ENCODE measurements at regions of chr22 and their contacts with region 1.

Region 1: DNA sequence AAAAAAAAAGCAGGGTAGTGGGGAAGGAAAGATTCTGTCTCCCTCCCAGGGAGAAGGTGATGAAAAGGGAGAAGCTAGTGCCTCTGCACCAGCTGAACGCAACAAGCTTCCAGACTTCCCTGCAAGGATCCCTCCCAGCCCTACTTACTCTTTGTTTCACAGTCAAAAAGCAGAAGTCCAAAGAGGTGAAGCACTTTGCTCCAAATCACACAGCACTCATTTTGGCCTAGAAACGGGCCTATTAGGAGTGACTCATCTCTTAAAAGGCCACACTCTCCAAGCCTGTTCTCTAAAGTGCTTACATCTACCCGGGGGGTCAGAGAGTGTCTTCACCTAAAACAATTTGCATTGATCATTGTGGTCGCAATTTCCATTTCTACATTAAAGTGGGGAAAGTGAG is 17.7 kb upstream of the GRK3 start:
- DNase-seq: peak; percentile 78 to 90 (median 85)
- H3K4me3 ChIP-seq: peak overlapping the region in 1 of 3 experiments; percentile 15
- H3K4me3 Mint-ChIP-seq: no peak overlapping the region
- H3K27ac ChIP-seq: peak overlapping the region in 1 of 2 donors; percentile 63
- H3K27ac Mint-ChIP-seq: peak overlapping the region; percentile 47 to 94 (median 78)
- H3K4me1 ChIP-seq: peaks cover 36 to 42% of the 10 kb centered on the region in 2 donors
- H3K4me1 Mint-ChIP-seq: peaks cover 41% of the 10 kb centered on the region
- H3K27me3 ChIP-seq: no peaks in the 10 kb centered on the region
- H3K27me3 Mint-ChIP-seq: peaks cover 0 to 4% (median under 1%) of the 10 kb centered on the region in 3 donors
- CTCF ChIP-seq: no peak

Region 2: DNA sequence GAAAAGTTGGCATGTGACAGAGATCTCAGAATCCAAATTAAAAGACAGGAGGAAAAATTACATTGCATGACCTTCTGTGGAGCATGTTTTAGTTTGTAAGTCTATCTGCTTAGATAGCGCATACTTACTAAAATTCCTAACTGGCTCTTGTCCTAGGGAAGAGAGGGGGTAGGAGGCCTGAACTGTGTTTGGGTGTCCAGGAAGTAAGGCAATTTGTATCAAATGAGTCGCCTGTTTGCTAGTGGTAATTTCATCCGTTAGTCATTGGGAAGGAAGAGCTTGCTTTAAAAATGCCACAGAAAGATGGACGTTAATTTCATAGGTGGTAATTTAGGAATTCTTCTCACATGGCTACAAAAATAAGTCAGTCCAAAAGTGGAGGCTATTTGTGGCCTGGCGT is 36.2 kb after region 1 on chr22:
- intact Hi-C with region 1: loop called in 1 of 2 experiments (anchors 5 kb)
- DNase-seq: no peak
- H3K4me3 ChIP-seq: no peak overlapping the region
- H3K4me3 Mint-ChIP-seq: no peak overlapping the region
- H3K27ac ChIP-seq: peak overlapping the region in 1 of 2 donors; percentile 38
- H3K27ac Mint-ChIP-seq: peak overlapping the region in 4 of 7 donors; percentile 30 to 71 (median 64)
- H3K4me1 ChIP-seq: peaks cover 11 to 13% of the 10 kb centered on the region in 2 donors
- H3K4me1 Mint-ChIP-seq: peaks cover 40% of the 10 kb centered on the region
- H3K27me3 ChIP-seq: no peaks in the 10 kb centered on the region
- H3K27me3 Mint-ChIP-seq: peaks cover 4 to 5% (median 4%) of the 10 kb centered on the region in 3 donors
- CTCF ChIP-seq: no peak

Measured in CD14-positive monocyte (primary cell).